Activated T-helper 1 cell treated with anti-CD3 and anti-CD28 coated beads, Interleukin-12 subunit alpha, Interleukin-12 subunit beta, Interleukin-2, Interleukin-4 antibody, amounts not matched to agents 30 ng/mL and 10 ng/mL and 1 ng/mL, durations not matched to agents 14 hours and 24 hours and 36 hours (primary cell): ENCODE measurements at regions of chr3 and their contacts with region 1.

Region 1: GRCh38 chr3:99023590-99024192 is 122.2 kb upstream of the DCBLD2 start:
- DNase-seq: no peak
- H3K4me3 Mint-ChIP-seq: no peak overlapping the region
- H3K27ac Mint-ChIP-seq: no peak overlapping the region
- H3K4me1 Mint-ChIP-seq: no peaks in the 10 kb centered on the region
- H3K27me3 Mint-ChIP-seq: peaks cover 2% of the 10 kb centered on the region

Region 2: DNA sequence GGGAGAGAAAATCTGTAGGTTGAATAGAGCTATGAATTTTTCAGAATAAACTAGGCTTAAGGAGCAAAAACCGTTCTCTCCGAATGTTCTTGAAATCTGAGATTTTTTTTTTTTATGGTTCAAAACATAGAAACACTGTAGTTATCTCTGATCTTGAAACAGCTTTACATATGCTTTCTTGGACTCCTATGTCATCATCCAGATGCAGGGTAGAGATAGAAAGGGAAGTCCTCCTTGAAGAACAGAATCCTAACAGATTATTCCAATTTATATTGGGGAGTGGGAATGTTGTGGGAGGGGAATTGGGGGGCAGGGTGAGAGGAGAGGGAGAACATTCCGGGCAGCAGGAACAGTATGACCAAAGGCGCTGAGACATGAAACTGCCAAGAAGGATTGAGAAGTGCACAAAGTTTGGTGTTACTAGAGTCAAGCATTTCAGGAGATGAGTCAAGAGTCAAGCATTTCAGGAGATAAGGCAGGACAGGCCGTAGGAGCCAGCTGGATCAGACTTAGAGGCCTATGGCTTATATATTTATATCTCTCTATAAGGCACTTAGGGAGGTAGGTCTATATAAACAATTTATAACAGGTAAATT is 282.5 kb before region 1 on chr3:
- intact Hi-C with region 1: no loop called
- DNase-seq: no peak
- H3K4me3 Mint-ChIP-seq: no peak overlapping the region
- H3K27ac Mint-ChIP-seq: no peak overlapping the region
- H3K4me1 Mint-ChIP-seq: no peaks in the 10 kb centered on the region
- H3K27me3 Mint-ChIP-seq: peaks cover 21% of the 10 kb centered on the region

Region 3: GRCh38 chr3:99172736-99173657 is 149.3 kb after region 1 on chr3:
- intact Hi-C with region 1: loop called (anchors 5 kb)
- DNase-seq: no peak
- H3K4me3 Mint-ChIP-seq: no peak overlapping the region
- H3K27ac Mint-ChIP-seq: no peak overlapping the region
- H3K4me1 Mint-ChIP-seq: no peaks in the 10 kb centered on the region
- H3K27me3 Mint-ChIP-seq: peaks cover 3% of the 10 kb centered on the region

Region 4: GRCh38 chr3:99686955-99687612 is 663.4 kb after region 1 on chr3:
- intact Hi-C with region 1: loop called (anchors 5 kb)
- DNase-seq: no peak
- H3K4me3 Mint-ChIP-seq: no peak overlapping the region
- H3K27ac Mint-ChIP-seq: no peak overlapping the region
- H3K4me1 Mint-ChIP-seq: no peaks in the 10 kb centered on the region
- H3K27me3 Mint-ChIP-seq: peaks cover 5% of the 10 kb centered on the region

Region 5: DNA sequence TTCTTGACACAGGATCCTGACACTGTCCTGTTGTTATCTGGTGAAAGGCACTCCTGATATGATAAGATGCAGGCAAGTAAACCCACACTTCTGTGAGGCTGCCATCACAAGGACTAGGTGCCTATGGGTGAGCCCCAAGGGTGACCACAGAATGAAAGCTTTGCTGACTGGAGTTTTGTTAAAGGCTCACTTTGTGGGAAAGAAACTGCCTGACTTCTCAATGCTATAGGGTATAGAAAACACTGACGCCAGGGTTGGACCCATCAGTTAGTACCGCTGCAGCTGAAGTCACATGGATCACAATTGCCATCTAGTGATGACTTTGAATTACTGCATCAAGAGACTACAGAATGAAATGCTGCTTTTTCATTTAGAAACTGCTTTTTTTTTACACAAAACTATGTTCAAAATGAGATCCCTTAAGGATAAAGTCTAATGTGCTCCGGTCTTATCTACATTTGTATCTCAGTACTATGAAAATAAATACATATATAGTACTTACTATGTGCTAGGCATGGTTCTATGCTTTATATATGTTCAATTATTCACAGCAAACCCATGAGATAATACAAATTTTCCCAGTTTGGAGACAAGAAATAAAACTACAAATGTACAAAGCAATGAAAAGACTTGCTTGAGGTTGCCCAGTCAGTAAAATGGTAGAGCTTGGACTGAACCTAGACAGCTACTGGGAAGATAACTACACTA is 729.7 kb after region 1 on chr3:
- intact Hi-C with region 1: loop called (anchors 1 kb)
- DNase-seq: no peak
- H3K4me3 Mint-ChIP-seq: no peak overlapping the region
- H3K27ac Mint-ChIP-seq: no peak overlapping the region
- H3K4me1 Mint-ChIP-seq: no peaks in the 10 kb centered on the region
- H3K27me3 Mint-ChIP-seq: peaks cover 25% of the 10 kb centered on the region

Region 6: DNA sequence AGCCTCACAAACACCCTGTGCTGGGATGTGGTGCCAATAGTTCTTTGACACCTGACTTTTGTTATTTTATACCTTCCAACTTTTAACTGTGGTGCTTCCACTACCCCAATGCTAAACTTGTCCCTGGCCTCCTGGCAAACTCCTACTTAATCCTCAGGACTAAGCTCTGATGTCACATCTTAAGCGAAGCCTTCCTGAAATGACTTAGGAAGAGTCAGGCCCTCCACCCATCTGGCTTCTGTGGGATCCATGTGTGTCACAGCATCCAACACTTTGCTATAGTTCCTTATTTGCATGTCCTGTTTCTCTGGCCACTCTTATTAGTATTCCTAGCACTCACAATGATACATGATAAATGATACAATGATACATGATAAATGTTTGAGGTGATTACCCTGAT is 957.4 kb after region 1 on chr3:
- intact Hi-C with region 1: no loop called
- DNase-seq: no peak
- H3K4me3 Mint-ChIP-seq: no peak overlapping the region
- H3K27ac Mint-ChIP-seq: no peak overlapping the region
- H3K4me1 Mint-ChIP-seq: no peaks in the 10 kb centered on the region
- H3K27me3 Mint-ChIP-seq: no peaks in the 10 kb centered on the region